ENCODE measurements at regions of chr7 and their contacts with region 1.

Region 1: GRCh38 chr7:101564778-101565211 is 64.3 kb downstream of the MYL10 start:
- DNase-seq: no peak

Region 2: GRCh38 chr7:102272075-102272917 is 707.5 kb after region 1 on chr7:
- in situ Hi-C with region 1: loop called (anchors 25 kb)
- DNase-seq: peak; percentile 61

Region 3: DNA sequence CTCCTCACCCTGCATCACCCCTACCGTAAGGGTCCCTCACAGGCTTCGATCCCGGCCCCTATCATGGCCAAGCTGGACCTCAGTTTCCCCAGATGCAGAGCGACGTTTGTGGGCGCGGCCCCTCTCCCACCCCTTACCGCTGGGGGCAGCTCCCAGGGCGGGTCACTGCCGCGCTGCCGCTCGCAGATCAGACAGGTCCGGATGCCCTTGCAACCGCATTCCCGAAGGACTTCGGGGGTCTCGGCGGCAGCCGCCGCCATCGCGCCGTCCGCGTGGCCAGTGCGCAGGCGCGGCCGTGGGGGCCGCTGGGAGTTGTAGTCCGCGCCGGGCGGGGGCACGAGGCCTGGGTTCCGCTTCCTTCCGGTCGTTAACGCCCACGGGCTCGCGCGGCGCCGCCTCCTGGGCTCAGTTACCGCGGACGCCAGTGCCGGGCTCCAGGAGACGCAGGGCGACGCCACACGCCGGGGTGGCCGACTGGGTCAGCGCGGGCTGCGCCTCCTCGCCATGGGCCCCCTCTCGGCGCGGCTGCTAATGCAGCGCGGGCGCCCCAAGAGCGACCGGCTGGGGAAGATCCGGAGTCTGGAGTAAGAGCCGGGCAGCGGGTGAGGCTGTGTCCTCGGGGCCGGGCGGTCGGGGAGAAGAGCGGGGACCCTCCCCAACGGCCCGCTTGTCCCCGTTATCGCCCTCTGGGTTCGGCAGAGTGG is 899.9 kb after region 1 on chr7 and contains the starts of genes ALKBH4 and LRWD1:
- in situ Hi-C with region 1: loop called (anchors 25 kb)
- DNase-seq: peak; percentile 92

Measured in KBM-7 (cell line).